Tibial artery (tissue), 4 donors: ENCODE measurements at regions of chr15 and their contacts with region 1.

Region 1: GRCh38 chr15:69729161-69729748 is 276.6 kb downstream of the RPLP1 start:
- DNase-seq: no peak
- H3K4me3 ChIP-seq: no peak overlapping the region
- H3K27ac ChIP-seq: no peak overlapping the region
- H3K4me1 ChIP-seq: no peaks in the 10 kb centered on the region
- H3K27me3 ChIP-seq: no peaks in the 10 kb centered on the region
- CTCF ChIP-seq: peak; percentile 62 to 64

Region 2: GRCh38 chr15:70362886-70363285 is 633.6 kb after region 1 on chr15:
- intact Hi-C with region 1: loop called (anchors 10 kb)
- DNase-seq: peak in 1 of 2 donors; percentile 63
- H3K4me3 ChIP-seq: no peak overlapping the region
- H3K27ac ChIP-seq: no peak overlapping the region
- H3K4me1 ChIP-seq: no peaks in the 10 kb centered on the region
- H3K27me3 ChIP-seq: peaks cover 0 to 2% of the 10 kb centered on the region in 2 donors
- CTCF ChIP-seq: peak; percentile 65 to 69